ENCODE measurements at regions of chr4 and their contacts with region 1.

Region 1: DNA sequence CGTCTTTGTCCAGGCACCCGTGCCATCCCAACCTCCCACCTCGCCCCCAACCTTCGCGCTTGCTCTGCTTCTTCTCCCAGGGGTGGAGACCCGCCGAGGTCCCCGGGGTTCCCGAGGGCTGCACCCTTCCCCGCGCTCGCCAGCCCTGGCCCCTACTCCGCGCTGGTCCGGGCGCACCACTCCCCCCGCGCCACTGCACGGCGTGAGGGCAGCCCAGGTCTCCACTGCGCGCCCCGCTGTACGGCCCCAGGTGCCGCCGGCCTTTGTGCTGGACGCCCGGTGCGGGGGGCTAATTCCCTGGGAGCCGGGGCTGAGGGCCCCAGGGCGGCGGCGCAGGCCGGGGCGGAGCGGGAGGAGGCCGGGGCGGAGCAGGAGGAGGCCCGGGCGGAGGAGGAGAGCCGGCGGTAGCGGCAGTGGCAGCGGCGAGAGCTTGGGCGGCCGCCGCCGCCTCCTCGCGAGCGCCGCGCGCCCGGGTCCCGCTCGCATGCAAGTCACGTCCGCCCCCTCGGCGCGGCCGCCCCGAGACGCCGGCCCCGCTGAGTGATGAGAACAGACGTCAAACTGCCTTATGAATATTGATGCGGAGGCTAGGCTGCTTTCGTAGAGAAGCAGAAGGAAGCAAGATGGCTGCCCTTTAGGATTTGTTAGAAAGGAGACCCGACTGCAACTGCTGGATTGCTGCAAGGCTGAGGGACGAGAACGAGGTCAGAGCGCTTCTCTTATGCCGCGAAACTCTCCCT is at the start of gene TET2:
- DNase-seq: peak; percentile 64 to 87 (median 76)
- ATAC-seq: peak; percentile 78 to 85 (median 82)
- H3K4me3 ChIP-seq: peak within 1 kb of the TSS; percentile 58 to 74 (median 70)
- H3K27ac ChIP-seq: peak within 1 kb of the TSS; percentile 58 to 89 (median 74)
- H3K4me1 ChIP-seq: peaks cover 11 to 21% (median 18%) of the 10 kb centered on the region in 3 donors
- H3K27me3 ChIP-seq: no peaks in the 10 kb centered on the region
- CTCF ChIP-seq: no peak
- total RNA-seq, gene TET2: 6.6 to 16.5 (median 8.6) TPM

Region 2: GRCh38 chr4:105461221-105461620 is 314.8 kb after region 1 on chr4:
- intact Hi-C with region 1: loop called in 1 of 3 experiments (anchors 10 kb)
- DNase-seq: no peak
- ATAC-seq: no peak
- H3K4me3 ChIP-seq: no peak overlapping the region
- H3K27ac ChIP-seq: no peak overlapping the region
- H3K4me1 ChIP-seq: no peaks in the 10 kb centered on the region
- H3K27me3 ChIP-seq: no peaks in the 10 kb centered on the region
- CTCF ChIP-seq: no peak

Measured in pancreas (tissue), 10 donors.